ENCODE measurements at regions of chr10 and their contacts with region 1.

Region 1: DNA sequence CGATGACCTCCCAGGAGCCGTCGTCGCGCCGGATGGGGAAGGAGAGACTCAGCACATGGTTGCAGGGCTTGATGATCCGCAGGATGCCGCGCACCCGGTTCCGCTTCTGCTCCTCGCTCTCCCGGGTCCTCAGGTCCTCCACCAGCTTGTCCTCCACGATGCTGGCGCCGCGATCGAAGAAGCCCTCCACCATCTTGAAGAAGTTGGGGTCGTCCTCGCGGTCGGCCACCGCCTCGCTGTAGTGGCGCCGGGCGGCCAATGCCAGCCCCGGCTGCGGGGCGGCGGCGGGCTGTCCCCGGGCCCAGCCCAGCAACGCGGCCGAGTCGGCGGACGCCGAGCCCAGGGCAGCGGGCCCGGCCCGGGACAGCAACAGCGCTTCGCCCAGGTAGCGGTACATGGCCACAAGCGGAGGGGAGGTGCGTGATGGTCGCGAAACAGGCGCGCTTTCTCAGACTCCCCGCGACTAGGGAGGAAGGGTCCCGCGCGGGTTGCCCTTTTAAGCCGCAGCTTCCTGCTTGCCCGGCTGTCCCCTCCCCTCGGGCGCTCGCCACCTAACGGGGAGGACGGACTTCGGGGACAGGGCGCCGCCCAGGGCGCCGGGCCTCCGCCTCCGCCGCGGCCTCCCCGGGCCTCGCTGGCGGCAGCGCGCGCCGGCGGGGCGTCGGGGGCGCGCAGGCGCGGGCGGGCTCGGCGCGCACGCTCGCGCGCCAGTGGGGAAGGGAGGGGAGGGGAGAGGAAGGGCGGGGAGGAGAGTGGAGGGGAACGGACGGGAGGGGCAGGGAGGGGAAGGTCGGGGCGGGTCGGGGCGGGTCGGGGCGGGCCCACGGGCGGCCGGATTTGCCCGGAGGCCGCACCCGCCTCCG is at the starts of genes GLUD1 and SHLD2:
- DNase-seq: peak; percentile 77 to 98 (median 84)

Region 2: GRCh38 chr10:85902051-85902450 is 1192.6 kb before region 1 on chr10:
- intact Hi-C with region 1: no loop called
- DNase-seq: no peak

Region 3: DNA sequence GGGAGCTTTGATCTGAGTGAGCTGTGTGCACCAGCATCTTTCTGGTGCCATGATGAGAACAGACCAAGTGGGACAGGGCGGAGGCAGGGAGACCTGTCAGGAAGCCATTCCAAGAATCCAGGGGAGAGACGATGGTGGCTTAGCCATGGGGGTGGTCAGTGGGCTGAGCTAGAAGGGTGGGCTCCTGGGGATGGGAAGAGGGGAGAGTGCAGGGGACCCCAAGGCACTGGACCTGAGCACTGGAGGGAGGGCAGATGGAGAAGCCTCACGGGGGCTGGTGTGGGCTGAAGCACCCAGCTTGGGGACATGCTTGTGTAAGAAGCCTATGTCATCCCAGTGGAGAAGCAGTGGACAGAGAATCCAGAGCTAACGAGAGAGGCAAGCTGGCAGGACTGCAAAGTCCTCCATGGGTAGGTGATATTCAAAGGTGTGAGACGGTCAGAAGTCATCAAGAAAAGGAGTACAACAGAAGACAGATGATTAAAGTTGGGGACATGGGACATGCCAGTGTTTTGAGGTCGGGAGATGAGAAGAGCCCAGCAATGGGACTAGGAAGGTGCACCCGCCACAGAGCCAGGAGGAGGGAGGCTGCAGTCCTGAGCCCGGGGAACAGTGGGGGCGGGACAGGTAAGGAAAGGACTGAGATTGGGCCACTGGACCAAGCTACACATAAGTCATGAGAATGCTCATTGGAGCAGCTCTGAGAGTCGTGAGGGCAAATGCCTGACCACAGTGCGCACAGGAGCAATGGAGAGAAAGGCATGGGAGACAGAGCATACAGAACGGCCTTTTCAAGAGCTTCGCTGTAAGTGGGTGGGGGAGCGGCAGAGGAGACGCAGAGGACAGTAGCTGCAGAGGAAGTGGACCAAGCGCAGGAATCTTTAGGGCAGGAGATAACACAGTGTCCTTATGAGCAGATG is 800.0 kb before region 1 on chr10:
- intact Hi-C with region 1: no loop called
- DNase-seq: no peak

Region 4: GRCh38 chr10:86730227-86730626 is 364.4 kb before region 1 on chr10:
- intact Hi-C with region 1: no loop called
- DNase-seq: peak in 3 of 10 donors; percentile 42 to 82 (median 47)

Region 5: DNA sequence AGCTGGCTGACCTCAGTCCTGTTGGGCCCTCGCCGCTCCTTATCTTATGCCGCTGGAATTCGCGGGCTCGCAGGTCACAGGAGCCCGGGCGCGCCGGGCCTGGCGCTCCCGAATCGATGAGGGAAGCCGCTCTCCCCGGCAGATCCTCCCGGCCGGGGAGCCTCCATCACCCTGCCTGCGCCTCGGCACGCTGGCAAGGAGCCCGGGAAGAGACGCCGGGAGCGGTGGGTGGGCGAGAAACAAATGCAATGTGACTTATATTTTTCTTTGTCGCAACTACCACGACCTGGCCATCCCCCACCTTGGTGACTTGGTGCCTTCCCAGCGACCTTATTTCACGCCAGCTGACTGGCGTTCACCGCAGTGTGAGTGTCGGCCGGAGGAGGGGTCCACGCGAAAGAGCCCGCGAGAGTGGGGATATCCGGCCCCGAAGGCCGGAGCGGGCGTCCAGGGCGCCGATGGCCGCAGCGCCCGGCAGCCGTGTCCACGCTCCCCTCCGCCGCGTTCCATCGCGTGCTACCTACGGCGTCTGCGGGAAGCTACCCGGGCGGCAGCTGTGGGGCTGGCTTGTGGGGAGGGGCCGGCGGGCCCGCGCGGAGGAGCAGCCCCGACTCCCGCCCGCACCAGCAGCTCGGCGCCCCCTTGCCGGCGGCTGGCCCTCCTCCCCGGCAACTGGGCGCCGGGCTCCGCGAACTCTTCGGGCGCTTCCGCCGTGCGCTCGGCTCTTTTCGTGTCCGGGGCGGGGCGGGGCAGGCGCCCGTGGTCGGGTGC is 338.7 kb before region 1 on chr10:
- intact Hi-C with region 1: loop called (anchors 2 kb)
- DNase-seq: peak; percentile 83 to 98 (median 88)

Region 6: GRCh38 chr10:86918022-86918471 is 176.6 kb before region 1 on chr10:
- intact Hi-C with region 1: no loop called
- DNase-seq: no peak

Region 7: GRCh38 chr10:86968271-86968993 is 126.2 kb before region 1 on chr10 and contains the start of gene ADIRF:
- intact Hi-C with region 1: loop called (anchors 5 kb)
- DNase-seq: peak in 2 of 10 donors; percentile 80 to 86

Region 8: GRCh38 chr10:87053111-87053510 is 41.5 kb before region 1 on chr10:
- intact Hi-C with region 1: loop called (anchors 2 kb)
- DNase-seq: peak in 7 of 10 donors; percentile 27 to 91 (median 57)